Activated T-helper 2 cell treated with anti-CD3 and anti-CD28 coated beads, Interferon-gamma antibody, Interleukin-2, Interleukin-4, amounts not matched to agents 10 μg/mL and 5 μg/mL and 100 μg/mL, durations not matched to agents 14 hours and 24 hours and 36 hours (primary cell): ENCODE measurements at regions of chr6 and their contacts with region 1.

Region 1: GRCh38 chr6:2999618-3000557 is at the start of gene NQO2:
- DNase-seq: peak; percentile 86
- H3K4me3 Mint-ChIP-seq: peak within 1 kb of the TSS; percentile 90
- H3K27ac Mint-ChIP-seq: peak within 1 kb of the TSS; percentile 91
- H3K4me1 Mint-ChIP-seq: peaks cover 24% of the 10 kb centered on the region
- H3K27me3 Mint-ChIP-seq: no peaks in the 10 kb centered on the region
- total RNA-seq, gene NQO2: 42.5 and 45.6 TPM in 2 replicates

Region 2: DNA sequence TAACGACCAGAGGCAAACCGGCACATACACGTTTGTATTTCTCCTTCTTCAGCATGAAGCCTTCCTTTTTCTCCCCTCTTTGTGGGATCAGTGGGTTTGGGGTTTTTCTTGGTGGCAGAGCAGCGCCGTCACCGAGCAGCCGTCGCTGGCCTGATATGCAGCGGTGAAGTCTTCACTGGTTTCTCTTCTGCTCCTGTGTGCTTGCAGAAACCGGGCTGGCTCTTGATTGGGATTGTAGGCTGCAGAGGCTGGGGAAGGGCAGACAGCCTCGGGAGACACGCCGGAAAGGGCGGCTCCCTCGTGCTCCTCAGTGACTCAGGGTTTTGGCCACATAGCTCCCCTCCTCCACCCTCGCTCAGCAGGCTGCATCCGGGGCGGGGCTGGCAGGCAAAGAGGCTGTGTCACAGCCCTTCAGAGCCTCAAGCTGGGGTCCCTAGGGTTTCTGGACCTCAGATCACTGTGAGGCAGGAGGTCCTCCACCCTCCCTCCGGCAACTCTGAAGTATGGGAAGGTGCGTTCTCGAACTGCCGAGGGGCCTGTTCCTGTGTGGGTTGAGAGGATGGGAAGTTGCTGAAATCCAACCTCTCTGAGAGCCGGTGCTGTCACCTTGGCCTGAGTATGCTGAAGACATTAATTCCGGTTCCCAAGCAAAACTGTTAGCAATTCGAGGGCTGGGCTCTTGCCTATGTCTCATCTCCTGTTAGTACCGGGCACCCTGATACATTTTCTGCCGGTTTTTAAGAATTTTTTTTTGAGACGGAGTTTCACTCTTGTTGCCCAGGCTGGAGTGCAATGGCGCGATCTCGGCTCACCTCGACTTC is 24.0 kb after region 1 on chr6:
- intact Hi-C with region 1: loop called (anchors 1 kb)
- DNase-seq: peak; percentile 87
- H3K4me3 Mint-ChIP-seq: peak overlapping the region; percentile 90
- H3K27ac Mint-ChIP-seq: peak overlapping the region; percentile 96
- H3K4me1 Mint-ChIP-seq: peaks cover 59% of the 10 kb centered on the region
- H3K27me3 Mint-ChIP-seq: no peaks in the 10 kb centered on the region

Region 3: GRCh38 chr6:3052481-3053230 is 52.8 kb after region 1 on chr6:
- intact Hi-C with region 1: loop called (anchors 1 kb)
- DNase-seq: no peak
- H3K4me3 Mint-ChIP-seq: peak overlapping the region; percentile 73
- H3K27ac Mint-ChIP-seq: peak overlapping the region; percentile 68
- H3K4me1 Mint-ChIP-seq: peaks cover 27% of the 10 kb centered on the region
- H3K27me3 Mint-ChIP-seq: peaks cover 10% of the 10 kb centered on the region

Region 4: DNA sequence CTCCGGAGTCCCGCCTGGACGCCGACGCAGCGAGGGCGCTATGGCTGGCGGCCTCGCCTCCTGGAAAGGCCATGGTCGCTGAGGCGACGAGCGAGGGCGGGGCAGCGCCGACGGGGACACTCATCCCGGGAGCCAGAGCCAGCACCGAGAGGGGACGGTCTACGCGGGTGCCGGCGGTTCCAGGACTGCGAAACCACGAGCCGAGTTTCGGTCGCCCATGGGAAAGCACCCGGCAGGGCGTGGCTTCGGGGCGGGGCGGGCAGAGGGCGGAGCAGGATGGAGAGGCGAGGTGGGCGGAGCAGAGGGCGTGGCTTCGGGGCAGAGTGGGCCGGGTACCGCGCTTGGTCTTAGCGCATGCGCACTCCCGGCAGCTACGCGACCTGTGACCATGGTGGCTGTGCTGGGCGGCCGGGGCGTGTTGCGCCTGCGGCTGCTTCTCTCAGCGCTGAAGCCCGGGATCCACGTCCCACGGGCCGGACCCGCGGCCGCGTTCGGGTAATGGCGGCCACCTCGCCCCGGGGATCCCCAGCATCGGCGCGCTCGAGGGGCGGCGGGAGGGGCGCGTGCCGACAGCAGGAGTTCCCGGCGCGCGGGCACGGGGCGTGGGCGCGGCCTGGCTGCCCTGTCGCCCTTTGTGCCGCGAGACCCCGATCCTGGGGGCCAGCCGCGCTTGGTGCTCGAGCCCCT is 118.6 kb after region 1 on chr6 and contains the start of gene BPHL:
- intact Hi-C with region 1: loop called (anchors 1 kb)
- DNase-seq: peak; percentile 98
- H3K4me3 Mint-ChIP-seq: peak within 1 kb of the TSS; percentile 80
- H3K27ac Mint-ChIP-seq: peak within 1 kb of the TSS; percentile 81
- H3K4me1 Mint-ChIP-seq: peaks cover 16% of the 10 kb centered on the region
- H3K27me3 Mint-ChIP-seq: no peaks in the 10 kb centered on the region
- total RNA-seq, gene BPHL: 12.1 and 15.8 TPM in 2 replicates

Region 5: DNA sequence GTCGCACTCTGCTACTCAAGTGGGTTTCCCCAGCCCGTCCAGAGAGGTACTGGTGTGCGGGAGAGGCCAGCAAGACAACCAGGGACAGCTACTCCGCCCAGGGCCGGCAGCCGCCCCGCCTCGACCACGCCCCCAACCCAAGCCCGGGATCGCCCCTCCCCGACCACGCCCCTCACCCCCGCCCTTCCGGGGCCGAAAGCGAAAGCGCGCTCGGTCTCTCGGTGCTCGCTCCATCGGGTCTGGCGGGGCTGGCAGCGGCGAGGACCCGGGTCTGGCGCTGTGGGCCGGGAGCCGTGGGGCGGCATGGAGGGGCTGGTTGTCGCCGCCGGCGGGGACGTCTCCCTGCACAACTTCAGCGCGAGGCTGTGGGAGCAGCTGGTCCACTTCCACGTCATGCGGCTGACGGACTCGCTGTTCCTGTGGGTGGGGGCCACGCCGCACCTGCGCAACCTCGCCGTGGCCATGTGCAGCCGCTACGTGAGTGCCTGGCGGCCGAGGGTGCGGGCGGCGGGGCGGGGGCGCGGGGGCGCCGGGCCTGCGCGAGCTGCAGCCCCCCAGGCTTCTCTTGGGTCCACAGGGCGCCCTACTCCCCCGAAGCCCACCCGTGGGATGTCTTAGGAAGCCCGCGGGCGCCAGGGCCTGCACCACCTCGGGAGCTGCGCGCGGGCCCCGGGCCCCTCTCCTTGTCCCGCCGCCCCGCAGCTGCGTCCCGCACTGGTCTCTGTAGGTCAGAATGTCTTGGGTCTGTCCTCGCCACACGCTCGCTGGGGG is 259.0 kb after region 1 on chr6 and contains the start of gene PSMG4:
- intact Hi-C with region 1: loop called (anchors 2 kb)
- DNase-seq: peak; percentile 90
- H3K4me3 Mint-ChIP-seq: peak within 1 kb of the TSS; percentile 98
- H3K27ac Mint-ChIP-seq: peak within 1 kb of the TSS; percentile 88
- H3K4me1 Mint-ChIP-seq: peaks cover 25% of the 10 kb centered on the region
- H3K27me3 Mint-ChIP-seq: peaks cover 17% of the 10 kb centered on the region
- total RNA-seq, gene PSMG4: 26.4 and 30.9 TPM in 2 replicates